ENCODE measurements at regions of chr4 and their contacts with region 1.

Region 1: GRCh38 chr4:54439831-54440243 is 210.7 kb downstream of the PDGFRA start:
- DNase-seq: peak in 1 of 3 donors; percentile 9
- ATAC-seq: peak; percentile 56
- H3K4me3 ChIP-seq: no peak overlapping the region
- H3K4me1 ChIP-seq: no peaks in the 10 kb centered on the region
- CTCF ChIP-seq: no peak

Region 2: DNA sequence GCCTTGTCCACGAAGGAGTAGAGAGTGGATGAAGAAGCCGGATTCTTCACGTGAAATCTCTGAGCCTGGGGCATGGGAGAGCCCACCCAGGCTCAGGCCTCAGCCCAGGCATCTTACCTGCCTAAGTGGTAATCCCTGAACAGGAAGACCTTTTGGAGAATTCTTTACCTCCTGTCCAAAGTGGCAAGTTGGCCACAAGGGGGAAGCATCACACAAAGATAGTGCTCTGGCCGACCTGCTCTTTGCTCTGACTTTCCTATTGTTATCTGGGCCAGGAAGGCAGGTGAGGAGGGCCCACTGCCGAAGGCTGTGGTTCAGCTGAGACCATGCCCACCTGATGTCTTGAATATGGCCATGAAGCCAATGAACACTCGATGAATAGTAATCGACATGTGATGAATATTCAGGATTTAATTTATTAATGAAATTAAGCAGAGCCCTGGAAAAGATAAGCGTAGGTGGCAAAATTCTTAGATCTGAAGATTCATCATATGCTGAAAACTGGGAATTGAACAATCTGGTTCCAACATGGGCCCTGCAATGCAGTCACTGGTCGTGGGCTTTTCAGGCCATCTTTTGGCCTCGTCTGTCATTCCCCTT is 116.9 kb before region 1 on chr4:
- intact Hi-C with region 1: loop called in 1 of 2 experiments (anchors 10 kb)
- DNase-seq: peak in 2 of 3 donors; percentile 57 to 82
- ATAC-seq: peak; percentile 76
- H3K4me3 ChIP-seq: no peak overlapping the region
- H3K4me1 ChIP-seq: no peaks in the 10 kb centered on the region
- CTCF ChIP-seq: peak; percentile 23

Region 3: DNA sequence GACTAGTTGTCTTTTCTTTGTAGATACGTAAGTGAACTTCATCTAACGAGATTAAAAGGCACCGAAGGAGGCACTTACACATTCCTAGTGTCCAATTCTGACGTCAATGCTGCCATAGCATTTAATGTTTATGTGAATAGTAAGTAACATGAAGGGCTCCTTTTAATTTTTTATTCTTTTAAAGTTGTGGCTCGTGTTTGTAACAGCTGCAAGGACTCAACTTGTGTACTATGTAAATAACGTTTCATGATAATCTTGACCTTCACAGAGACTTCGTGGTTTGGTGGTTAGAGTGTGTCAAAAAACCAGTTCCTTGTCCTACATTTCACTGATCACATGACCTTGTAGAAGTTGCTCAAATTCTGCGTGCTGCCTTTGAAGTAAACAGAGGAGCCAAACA is 269.6 kb after region 1 on chr4:
- intact Hi-C with region 1: no loop called
- DNase-seq: peak in 1 of 3 donors; percentile 12
- ATAC-seq: peak; percentile 43
- H3K4me3 ChIP-seq: no peak overlapping the region
- H3K4me1 ChIP-seq: no peaks in the 10 kb centered on the region
- CTCF ChIP-seq: no peak

Measured in mucosa of descending colon (tissue), 3 donors.